Endothelial cell of umbilical vein (primary cell): ENCODE measurements at regions of chr6 and their contacts with region 1.

Region 1: DNA sequence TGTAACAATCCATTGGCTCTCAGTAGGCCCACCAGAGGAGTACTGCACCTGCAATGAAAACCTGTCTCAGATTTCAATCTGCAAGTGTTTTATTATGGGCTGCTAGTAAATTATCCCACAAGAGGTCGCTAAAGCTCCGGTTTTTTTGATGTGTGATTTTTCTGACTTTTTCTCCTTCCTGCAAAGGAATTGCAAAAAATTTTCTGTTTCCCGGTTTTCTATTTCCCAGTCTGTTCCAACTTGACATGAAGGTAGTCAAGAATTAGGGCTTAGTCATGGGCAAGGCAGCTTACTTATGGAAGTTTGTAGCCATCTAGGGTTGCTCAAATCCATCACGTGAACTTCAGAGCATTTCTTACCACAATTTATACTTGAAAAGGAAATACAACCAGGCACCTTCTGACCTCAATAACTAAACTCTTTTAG is 38.5 kb upstream of the AHI1 start:
- DNase-seq: peak; percentile 70
- H3K4me3 ChIP-seq: no peak overlapping the region
- H3K27ac ChIP-seq: no peak overlapping the region
- H3K4me1 ChIP-seq: peaks cover 10% of the 10 kb centered on the region
- H3K27me3 ChIP-seq: no peaks in the 10 kb centered on the region
- CTCF ChIP-seq: peak; percentile 41 to 43
- POLR2A ChIP-seq: no peak

Region 2: DNA sequence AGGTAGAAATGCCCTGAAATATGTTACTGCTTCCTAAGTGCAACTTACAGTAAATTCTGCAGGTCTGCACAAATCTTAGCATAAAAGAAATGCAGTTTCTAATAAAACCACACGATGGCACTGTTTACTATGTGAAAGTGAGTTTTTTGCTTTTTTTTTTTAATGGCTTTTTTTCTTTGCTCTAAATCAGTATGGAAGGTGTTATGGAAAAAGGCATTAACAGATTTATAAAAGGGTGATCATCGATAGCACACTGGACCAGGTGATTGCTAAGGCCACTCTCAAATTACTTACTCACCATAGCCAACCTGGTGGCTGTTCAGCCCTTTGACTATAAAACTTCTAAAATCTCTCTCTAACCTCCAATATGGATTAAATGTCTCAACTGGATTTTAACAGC is 84.3 kb before region 1 on chr6:
- CTCF ChIA-PET with region 1: interaction called, 8 read pairs
- POLR2A ChIA-PET with region 1: no interaction called
- dilution Hi-C with region 1: no loop called
- intact Hi-C with region 1: loop called (anchors 2 kb)
- DNase-seq: peak; percentile 63
- H3K4me3 ChIP-seq: no peak overlapping the region
- H3K27ac ChIP-seq: no peak overlapping the region
- H3K4me1 ChIP-seq: no peaks in the 10 kb centered on the region
- H3K27me3 ChIP-seq: no peaks in the 10 kb centered on the region
- CTCF ChIP-seq: peak; percentile 35 to 42
- POLR2A ChIP-seq: no peak

Region 3: DNA sequence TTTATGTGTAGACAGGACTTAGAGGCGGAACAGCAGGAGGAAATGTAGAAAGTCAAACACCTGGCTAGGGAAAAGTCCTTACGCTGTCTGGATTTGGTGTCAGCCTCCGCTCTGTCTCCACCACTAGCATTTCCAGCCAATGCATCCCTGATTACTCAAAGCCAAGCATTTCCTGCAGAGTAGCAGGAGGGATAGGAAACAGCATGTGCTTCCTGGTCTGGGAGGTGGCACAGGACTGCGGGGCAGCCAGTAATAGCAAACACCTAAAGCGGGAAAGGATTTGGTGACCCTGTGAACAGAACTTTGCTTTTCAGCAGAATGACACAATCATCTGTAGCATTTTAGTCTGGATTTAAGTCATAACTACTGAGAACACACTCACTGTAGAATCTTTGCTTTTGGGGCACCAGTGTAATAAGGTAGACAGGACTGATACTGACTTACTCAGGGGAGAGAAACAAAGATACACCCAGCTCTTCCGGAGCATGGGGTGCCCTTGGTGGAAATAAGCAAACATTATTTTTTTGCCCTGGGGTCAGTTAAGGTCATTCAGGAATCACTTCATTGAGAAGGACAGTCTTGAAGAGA is 94.9 kb after region 1 on chr6:
- CTCF ChIA-PET with region 1: interaction called, 5 read pairs
- POLR2A ChIA-PET with region 1: no interaction called
- dilution Hi-C with region 1: no loop called
- intact Hi-C with region 1: loop called (anchors 2 kb)
- DNase-seq: peak; percentile 91
- H3K4me3 ChIP-seq: no peak overlapping the region
- H3K27ac ChIP-seq: peak overlapping the region; percentile 80
- H3K4me1 ChIP-seq: peaks cover 21% of the 10 kb centered on the region
- H3K27me3 ChIP-seq: no peaks in the 10 kb centered on the region
- CTCF ChIP-seq: no peak
- POLR2A ChIP-seq: no peak

Region 4: DNA sequence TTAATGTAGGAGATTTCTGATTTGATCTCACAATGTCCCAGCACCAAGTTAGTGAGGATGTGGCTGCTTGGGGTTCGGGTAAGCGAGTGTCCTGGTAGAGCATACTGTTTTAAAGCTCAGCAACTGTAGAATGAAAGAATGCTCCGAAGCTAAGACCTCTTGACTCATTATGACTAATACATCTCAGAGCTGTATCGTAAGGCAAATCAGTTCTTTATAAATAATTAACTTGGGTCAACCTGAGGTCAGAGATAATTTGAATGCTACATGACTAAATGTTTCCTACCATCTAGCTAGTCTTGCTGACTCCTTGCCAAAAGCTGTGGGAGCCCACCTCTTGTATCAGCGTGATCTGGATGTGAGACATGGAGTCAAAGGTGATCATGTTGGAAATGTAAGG is 186.7 kb after region 1 on chr6:
- CTCF ChIA-PET with region 1: interaction called, 3 read pairs
- POLR2A ChIA-PET with region 1: no interaction called
- dilution Hi-C with region 1: no loop called
- intact Hi-C with region 1: loop called (anchors 2 kb)
- DNase-seq: peak; percentile 88
- H3K4me3 ChIP-seq: peak overlapping the region in 1 of 3 experiments; percentile 20
- H3K27ac ChIP-seq: peak overlapping the region; percentile 62
- H3K4me1 ChIP-seq: peaks cover 15% of the 10 kb centered on the region
- H3K27me3 ChIP-seq: no peaks in the 10 kb centered on the region
- CTCF ChIP-seq: no peak
- POLR2A ChIP-seq: no peak

Region 5: GRCh38 chr6:135909737-135910387 is 373.9 kb after region 1 on chr6:
- CTCF ChIA-PET with region 1: interaction called, 62 read pairs
- POLR2A ChIA-PET with region 1: no interaction called
- dilution Hi-C with region 1: no loop called
- intact Hi-C with region 1: loop called (anchors 1 kb)
- DNase-seq: peak; percentile 52
- H3K4me3 ChIP-seq: no peak overlapping the region
- H3K27ac ChIP-seq: no peak overlapping the region
- H3K4me1 ChIP-seq: no peaks in the 10 kb centered on the region
- H3K27me3 ChIP-seq: no peaks in the 10 kb centered on the region
- CTCF ChIP-seq: peak; percentile 50 to 54
- POLR2A ChIP-seq: no peak

Region 6: DNA sequence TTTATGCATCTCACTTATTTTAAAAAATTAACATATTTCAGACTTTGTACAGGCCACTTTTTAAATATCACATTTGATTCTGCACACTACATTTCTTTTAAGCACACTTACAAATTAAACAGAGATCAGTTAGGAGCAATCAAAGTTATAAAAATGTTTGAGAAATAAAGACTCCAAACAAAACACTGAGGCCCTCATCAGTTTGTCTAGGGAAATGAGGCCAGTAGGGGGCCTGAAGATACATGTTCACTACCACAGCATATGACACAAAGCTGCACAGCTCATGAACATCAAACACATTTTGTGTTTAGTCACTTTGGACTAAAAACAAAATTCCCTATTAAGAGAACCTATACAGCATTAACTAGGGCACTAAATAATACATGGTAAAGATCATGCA is 496.0 kb after region 1 on chr6:
- CTCF ChIA-PET with region 1: interaction called, 17 read pairs
- POLR2A ChIA-PET with region 1: no interaction called
- dilution Hi-C with region 1: no loop called
- intact Hi-C with region 1: loop called (anchors 1 kb)
- DNase-seq: peak; percentile 66
- H3K4me3 ChIP-seq: no peak overlapping the region
- H3K27ac ChIP-seq: no peak overlapping the region
- H3K4me1 ChIP-seq: peaks cover 36% of the 10 kb centered on the region
- H3K27me3 ChIP-seq: no peaks in the 10 kb centered on the region
- CTCF ChIP-seq: peak; percentile 55 to 61
- POLR2A ChIP-seq: no peak

Region 7: GRCh38 chr6:136226027-136226673 is 690.1 kb after region 1 on chr6:
- CTCF ChIA-PET with region 1: interaction called, 113 read pairs
- POLR2A ChIA-PET with region 1: no interaction called
- dilution Hi-C with region 1: no loop called
- intact Hi-C with region 1: loop called (anchors 1 kb)
- DNase-seq: peak; percentile 67
- H3K4me3 ChIP-seq: peak overlapping the region in 1 of 3 experiments; percentile 25
- H3K27ac ChIP-seq: no peak overlapping the region
- H3K4me1 ChIP-seq: no peaks in the 10 kb centered on the region
- H3K27me3 ChIP-seq: no peaks in the 10 kb centered on the region
- CTCF ChIP-seq: peak; percentile 97 to 99
- POLR2A ChIP-seq: no peak